ENCODE measurements at regions of chr6 and their contacts with region 1.

Region 1: DNA sequence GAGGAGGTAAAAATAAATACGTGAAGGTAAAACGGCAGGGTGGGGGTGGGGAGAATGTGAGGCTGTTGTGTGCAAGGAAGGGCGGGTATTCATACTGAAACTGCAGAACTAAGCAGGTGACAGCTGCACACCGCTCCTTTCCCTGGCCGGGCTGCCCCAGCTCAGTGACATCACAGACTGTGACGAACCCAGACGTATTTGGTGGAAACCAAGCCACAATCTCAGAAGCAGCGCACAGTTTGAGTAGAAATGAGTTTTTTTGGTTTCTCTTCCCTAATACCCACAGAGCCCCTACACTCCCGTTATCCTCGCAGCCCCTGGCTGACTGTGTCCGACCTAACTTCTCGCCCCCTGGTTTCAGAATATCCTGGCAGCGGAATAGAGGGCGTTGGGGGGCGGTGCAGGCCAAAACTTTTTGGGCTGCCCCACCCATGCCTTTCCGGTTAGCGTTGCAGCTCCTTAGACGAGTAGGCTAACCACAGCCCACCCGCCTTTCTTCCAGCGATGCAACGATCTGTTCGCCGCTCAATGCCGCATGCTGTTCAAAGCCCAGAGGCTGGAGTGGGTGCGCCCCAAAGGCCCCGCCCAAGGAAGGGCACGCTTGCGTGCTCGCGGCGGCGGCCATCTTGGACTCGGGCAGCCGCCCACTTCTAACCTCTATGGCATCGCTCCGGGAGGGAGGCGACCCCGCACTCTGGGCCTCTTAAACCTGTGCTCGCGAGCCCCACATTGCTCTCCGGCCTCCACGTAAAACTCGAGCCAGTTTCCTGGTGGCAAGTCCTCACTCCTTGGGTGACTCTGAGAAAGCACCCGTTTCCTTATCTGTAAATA is 9.1 kb downstream of the BAK1 start:
- DNase-seq: peak; percentile 96
- H3K4me3 Mint-ChIP-seq: peak overlapping the region; percentile 75
- H3K27ac Mint-ChIP-seq: peak overlapping the region; percentile 100
- H3K4me1 Mint-ChIP-seq: peaks cover 61% of the 10 kb centered on the region
- H3K27me3 Mint-ChIP-seq: no peaks in the 10 kb centered on the region

Region 2: DNA sequence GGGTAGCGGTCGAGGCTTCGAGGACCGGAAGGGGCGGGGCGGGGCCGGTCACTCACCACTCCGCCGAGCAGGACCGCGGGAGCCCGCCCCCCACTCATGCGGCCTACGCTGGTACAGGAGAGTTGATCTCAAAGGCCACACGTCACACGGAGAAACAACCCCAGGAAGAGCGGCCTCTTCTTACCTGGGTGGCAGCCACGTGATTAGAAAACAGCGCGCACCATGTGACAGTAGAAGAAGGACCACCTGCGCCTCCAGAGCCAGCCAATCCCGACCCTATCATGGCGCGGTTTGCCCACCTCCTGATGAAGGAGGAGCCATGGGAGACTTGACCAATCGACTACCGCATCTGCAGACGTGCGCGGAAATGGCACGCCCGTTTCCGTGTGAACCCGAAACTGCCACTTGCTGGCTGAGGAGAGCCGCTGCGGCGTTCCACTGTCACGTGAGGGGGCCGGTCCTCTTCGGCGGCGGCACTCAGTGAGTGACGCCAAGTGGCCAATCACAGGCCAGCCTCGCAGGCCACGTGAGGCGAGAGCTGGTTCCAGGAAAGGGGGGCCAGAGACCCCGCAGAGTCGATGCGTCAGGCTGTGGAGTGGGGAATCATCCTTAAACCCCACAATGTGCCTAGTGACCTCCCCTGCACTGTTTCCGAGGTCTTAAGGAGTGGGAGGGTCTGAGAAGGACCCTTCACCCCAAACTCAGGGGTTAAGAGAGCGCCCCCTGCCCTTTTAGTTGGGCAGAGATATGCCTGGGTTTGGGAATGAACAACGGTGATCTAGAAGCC is 152.9 kb before region 1 on chr6 and contains the start of gene CUTA:
- CTCF ChIA-PET with region 1: no interaction called
- POLR2A ChIA-PET with region 1: interaction called, 19 read pairs
- DNase-seq: peak; percentile 99
- H3K4me3 Mint-ChIP-seq: peak within 1 kb of the TSS; percentile 92
- H3K27ac Mint-ChIP-seq: peak within 1 kb of the TSS; percentile 98
- H3K4me1 Mint-ChIP-seq: peaks cover 67% of the 10 kb centered on the region
- H3K27me3 Mint-ChIP-seq: peaks cover 15% of the 10 kb centered on the region
- total RNA-seq, gene CUTA: 243 TPM

Region 3: DNA sequence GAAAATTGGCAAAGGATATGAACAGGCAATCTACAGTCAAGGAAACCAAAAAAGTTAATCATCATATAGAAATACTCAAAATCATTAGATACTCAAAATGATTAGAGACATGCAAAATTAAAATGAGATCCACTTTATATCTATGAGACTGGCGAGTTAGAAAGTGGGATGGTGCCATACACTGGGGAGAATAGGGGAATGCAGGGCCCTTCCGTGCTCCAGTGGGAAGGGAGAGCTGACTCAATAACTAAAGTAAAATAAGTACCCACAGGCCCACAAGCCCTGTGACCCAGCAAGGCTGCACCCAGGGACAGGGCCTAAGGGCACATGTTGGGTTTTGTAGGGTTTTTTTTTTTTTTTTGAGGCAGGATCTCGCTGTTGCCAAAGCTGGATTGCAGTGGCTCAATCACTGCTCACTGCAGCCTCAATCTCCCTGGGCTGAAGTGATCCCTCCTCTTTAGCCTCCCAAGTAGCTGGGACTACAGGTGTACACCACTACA is 35.9 kb before region 1 on chr6:
- CTCF ChIA-PET with region 1: no interaction called
- POLR2A ChIA-PET with region 1: interaction called, 20 read pairs
- DNase-seq: no peak
- H3K4me3 Mint-ChIP-seq: no peak overlapping the region
- H3K27ac Mint-ChIP-seq: no peak overlapping the region
- H3K4me1 Mint-ChIP-seq: peaks cover 25% of the 10 kb centered on the region
- H3K27me3 Mint-ChIP-seq: no peaks in the 10 kb centered on the region

Region 4: GRCh38 chr6:33547499-33547898 is 23.5 kb before region 1 on chr6:
- CTCF ChIA-PET with region 1: interaction called, 3 read pairs
- POLR2A ChIA-PET with region 1: interaction called, 20 read pairs
- DNase-seq: no peak
- H3K4me3 Mint-ChIP-seq: no peak overlapping the region
- H3K27ac Mint-ChIP-seq: peak overlapping the region; percentile 72
- H3K4me1 Mint-ChIP-seq: peaks cover 21% of the 10 kb centered on the region
- H3K27me3 Mint-ChIP-seq: no peaks in the 10 kb centered on the region

Measured in activated CD4-positive, alpha-beta memory T cell treated with anti-CD3 and anti-CD28 coated beads, Interleukin-2, amount 10 ng/mL, durations not matched to agents 7 days and 5 days (primary cell).